ENCODE measurements at regions of chr1 and their contacts with region 1.

Region 1: GRCh38 chr1:43934101-43934985 is 742 bp downstream of the ARTN start:
- DNase-seq: peak; percentile 63 to 67 (median 67)
- H3K4me3 ChIP-seq: peak overlapping the region in 1 of 3 experiments; percentile 73
- H3K4me3 Mint-ChIP-seq: peak overlapping the region; percentile 64 to 84
- H3K27ac ChIP-seq: no peak overlapping the region
- H3K27ac Mint-ChIP-seq: peak overlapping the region in 1 of 7 donors; percentile 13
- H3K4me1 ChIP-seq: peaks cover 35 to 39% of the 10 kb centered on the region in 2 donors
- H3K4me1 Mint-ChIP-seq: peaks cover 44% of the 10 kb centered on the region
- H3K27me3 ChIP-seq: peaks cover 0 to 7% of the 10 kb centered on the region in 2 donors
- H3K27me3 Mint-ChIP-seq: peaks cover 6 to 25% (median 11%) of the 10 kb centered on the region in 3 donors
- CTCF ChIP-seq: peak; percentile 98

Region 2: DNA sequence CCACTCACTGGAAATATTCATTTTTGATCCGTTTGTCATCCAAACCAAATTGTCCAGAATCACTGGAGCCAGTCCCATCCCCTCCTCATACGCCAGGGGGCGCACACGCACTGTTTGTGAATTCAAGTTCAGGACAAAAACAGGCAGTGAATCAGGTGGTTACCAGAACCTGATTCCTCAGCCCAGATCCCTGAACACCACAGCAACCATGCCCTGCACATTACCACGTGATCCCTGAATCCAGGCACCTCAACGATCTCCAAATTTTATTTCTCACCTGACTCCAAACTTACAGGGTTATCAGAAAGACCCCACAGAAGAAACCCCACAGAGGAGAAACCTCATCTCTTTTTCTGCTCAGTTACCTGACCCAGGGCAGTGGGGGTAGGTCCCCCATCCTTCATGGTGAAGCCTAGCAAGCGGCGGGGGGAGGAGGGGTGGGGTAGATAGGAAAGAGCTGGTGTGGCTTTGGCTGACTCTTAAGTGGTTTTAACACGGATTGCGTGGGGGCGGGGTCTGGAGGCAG is 405.1 kb before region 1 on chr1:
- intact Hi-C with region 1: loop called in 1 of 2 experiments (anchors 10 kb)
- DNase-seq: peak; percentile 56 to 70 (median 62)
- H3K4me3 ChIP-seq: no peak overlapping the region
- H3K4me3 Mint-ChIP-seq: peak overlapping the region in 1 of 2 donors; percentile 93
- H3K27ac ChIP-seq: no peak overlapping the region
- H3K27ac Mint-ChIP-seq: no peak overlapping the region
- H3K4me1 ChIP-seq: peaks cover 4 to 5% of the 10 kb centered on the region in 2 donors
- H3K4me1 Mint-ChIP-seq: peaks cover 12% of the 10 kb centered on the region
- H3K27me3 ChIP-seq: peaks cover 25 to 35% of the 10 kb centered on the region in 2 donors
- H3K27me3 Mint-ChIP-seq: peaks cover 39 to 48% (median 42%) of the 10 kb centered on the region in 3 donors
- CTCF ChIP-seq: peak; percentile 90

Region 3: GRCh38 chr1:43974443-43975248 is 40.3 kb after region 1 on chr1 and contains the start of gene ATP6V0B:
- intact Hi-C with region 1: no loop called
- DNase-seq: peak; percentile 94 to 95 (median 94)
- H3K4me3 ChIP-seq: peak within 1 kb of the TSS; percentile 86 to 98 (median 97)
- H3K4me3 Mint-ChIP-seq: peak within 1 kb of the TSS; percentile 98 to 99
- H3K27ac ChIP-seq: peak within 1 kb of the TSS; percentile 97 to 99
- H3K27ac Mint-ChIP-seq: peak within 1 kb of the TSS; percentile 95 to 97 (median 96)
- H3K4me1 ChIP-seq: peaks cover 50 to 59% of the 10 kb centered on the region in 2 donors
- H3K4me1 Mint-ChIP-seq: peaks cover 53% of the 10 kb centered on the region
- H3K27me3 ChIP-seq: no peaks in the 10 kb centered on the region
- H3K27me3 Mint-ChIP-seq: peaks cover 2 to 8% (median 2%) of the 10 kb centered on the region in 3 donors
- CTCF ChIP-seq: peak; percentile 21
- polyA plus RNA-seq, gene ATP6V0B: 465 to 1,219 (median 954) TPM

Region 4: GRCh38 chr1:43991476-43992231 is 57.3 kb after region 1 on chr1 and contains the start of gene CCDC24:
- intact Hi-C with region 1: no loop called
- DNase-seq: peak; percentile 67 to 77 (median 71)
- H3K4me3 ChIP-seq: peak within 1 kb of the TSS; percentile 49 to 92 (median 67)
- H3K4me3 Mint-ChIP-seq: peak within 1 kb of the TSS; percentile 96
- H3K27ac ChIP-seq: peak within 1 kb of the TSS; percentile 56 to 82
- H3K27ac Mint-ChIP-seq: peak within 1 kb of the TSS; percentile 81 to 96 (median 92)
- H3K4me1 ChIP-seq: peaks cover 13 to 19% of the 10 kb centered on the region in 2 donors
- H3K4me1 Mint-ChIP-seq: peaks cover 18% of the 10 kb centered on the region
- H3K27me3 ChIP-seq: no peaks in the 10 kb centered on the region
- H3K27me3 Mint-ChIP-seq: peaks cover 2 to 10% (median 7%) of the 10 kb centered on the region in 3 donors
- CTCF ChIP-seq: no peak
- polyA plus RNA-seq, gene CCDC24: 1.1 to 3.0 (median 1.9) TPM